Activated B cell treated with CpG ODN at 0.5 μM for 24 hours (primary cell): ENCODE measurements at regions of chr19 and their contacts with region 1.

Region 1: DNA sequence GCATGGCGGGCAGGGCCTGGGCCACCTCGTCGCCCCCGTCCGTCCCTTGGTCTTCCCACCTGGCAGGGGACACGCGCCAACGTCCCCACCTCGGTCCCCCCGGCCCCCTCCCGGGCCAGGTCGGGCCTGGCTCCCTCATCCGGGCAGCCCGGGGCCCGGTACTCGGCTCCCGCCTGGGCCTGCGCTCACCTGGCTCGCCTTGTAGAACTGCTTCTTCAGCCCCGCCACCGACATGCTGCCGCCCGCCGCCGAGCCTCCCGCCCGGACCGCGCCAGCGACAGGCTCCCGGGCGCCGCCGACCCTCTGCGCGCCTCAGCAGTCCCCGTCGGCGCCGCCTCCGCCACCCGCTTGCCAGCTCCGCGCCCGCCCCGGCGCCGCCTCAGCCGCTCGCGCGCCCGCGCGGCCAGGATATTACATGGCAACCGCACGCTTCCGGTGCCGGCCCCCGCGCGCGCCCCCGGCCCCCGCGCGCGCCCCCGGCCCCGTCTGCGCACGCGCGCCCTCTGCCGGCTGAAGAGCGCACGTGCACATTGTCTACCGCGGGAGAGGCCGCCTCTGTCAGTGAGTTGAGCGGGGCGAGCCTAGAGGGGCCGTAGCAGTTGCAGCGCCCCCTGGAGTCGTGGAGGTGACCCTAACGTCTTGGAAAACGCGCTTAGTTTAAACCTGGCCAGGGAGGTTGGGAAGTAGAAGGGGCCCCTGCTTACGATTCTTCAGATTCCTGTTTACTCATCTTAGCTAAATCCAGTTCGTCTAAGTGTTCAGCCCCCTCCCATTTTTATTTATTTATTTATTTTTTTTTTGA is at the start of gene SH3GL1:
- DNase-seq: peak; percentile 95
- ATAC-seq: peak; percentile 65
- H3K4me3 Mint-ChIP-seq: peak within 1 kb of the TSS; percentile 88
- H3K27ac Mint-ChIP-seq: peak within 1 kb of the TSS; percentile 91
- H3K4me1 Mint-ChIP-seq: peaks cover 59% of the 10 kb centered on the region
- H3K27me3 Mint-ChIP-seq: no peaks in the 10 kb centered on the region
- CTCF ChIP-seq: peak; percentile 58
- total RNA-seq, gene SH3GL1: 33.8 and 43.7 TPM in 2 replicates

Region 2: DNA sequence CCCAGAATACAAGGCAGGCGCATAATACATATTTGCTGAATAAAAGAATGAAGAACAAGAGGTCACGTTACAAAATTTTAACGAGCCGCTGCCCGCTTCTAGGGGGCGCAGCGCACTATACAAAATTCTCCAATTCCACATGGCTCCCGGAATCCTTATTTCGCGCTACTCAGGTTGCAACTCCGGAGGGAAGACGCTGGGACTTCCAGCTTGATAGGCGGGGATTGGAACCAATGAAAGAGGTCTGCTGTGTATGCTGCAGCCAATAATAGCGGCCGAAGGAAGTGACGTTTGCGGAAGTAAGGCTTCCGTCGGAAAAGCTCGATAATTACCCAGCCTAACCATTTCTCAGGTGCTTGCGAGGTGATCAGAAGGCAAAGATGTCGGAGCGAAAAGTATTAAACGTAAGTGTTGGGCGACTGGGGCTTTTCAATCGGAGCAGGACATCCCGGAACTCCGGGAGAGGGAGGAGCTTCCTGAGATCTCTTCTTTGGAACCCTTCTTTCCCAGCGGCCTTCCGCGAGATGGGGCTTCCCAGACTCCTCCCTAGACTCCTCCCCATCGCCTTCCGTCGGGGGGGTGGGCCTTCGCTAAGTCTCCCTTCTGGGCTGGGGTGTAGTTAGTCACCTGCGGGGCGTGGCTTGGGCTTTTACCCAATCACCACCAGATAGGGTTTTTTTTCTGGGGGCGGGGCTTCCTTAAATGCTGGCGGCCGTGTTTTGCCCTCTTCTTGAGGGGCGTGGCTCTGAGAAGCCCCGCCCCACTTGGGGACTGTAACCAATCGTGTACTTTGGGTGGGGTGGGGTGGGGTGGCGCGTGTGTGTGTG is 153.4 kb before region 1 on chr19 and contains the start of gene YJU2:
- CTCF ChIA-PET with region 1: no interaction called
- POLR2A ChIA-PET with region 1: interaction called, 3 read pairs
- intact Hi-C with region 1: loop called (anchors 1 kb)
- DNase-seq: peak; percentile 89
- ATAC-seq: peak; percentile 96
- H3K4me3 Mint-ChIP-seq: peak within 1 kb of the TSS; percentile 90
- H3K27ac Mint-ChIP-seq: peak within 1 kb of the TSS; percentile 96
- H3K4me1 Mint-ChIP-seq: peaks cover 35% of the 10 kb centered on the region
- H3K27me3 Mint-ChIP-seq: no peaks in the 10 kb centered on the region
- CTCF ChIP-seq: no peak
- total RNA-seq, gene YJU2: 40.7 and 43.0 TPM in 2 replicates

Region 3: GRCh38 chr19:4278419-4279266 is 121.7 kb before region 1 on chr19 and contains the start of gene SHD:
- CTCF ChIA-PET with region 1: no interaction called
- POLR2A ChIA-PET with region 1: no interaction called
- intact Hi-C with region 1: no loop called
- DNase-seq: no peak
- ATAC-seq: no peak
- H3K4me3 Mint-ChIP-seq: peak within 1 kb of the TSS; percentile 32
- H3K27ac Mint-ChIP-seq: no peak within 1 kb of the TSS
- H3K4me1 Mint-ChIP-seq: peaks cover 4% of the 10 kb centered on the region
- H3K27me3 Mint-ChIP-seq: peaks cover 31% of the 10 kb centered on the region
- CTCF ChIP-seq: no peak
- total RNA-seq, gene SHD: not detected in 2 replicates

Region 4: DNA sequence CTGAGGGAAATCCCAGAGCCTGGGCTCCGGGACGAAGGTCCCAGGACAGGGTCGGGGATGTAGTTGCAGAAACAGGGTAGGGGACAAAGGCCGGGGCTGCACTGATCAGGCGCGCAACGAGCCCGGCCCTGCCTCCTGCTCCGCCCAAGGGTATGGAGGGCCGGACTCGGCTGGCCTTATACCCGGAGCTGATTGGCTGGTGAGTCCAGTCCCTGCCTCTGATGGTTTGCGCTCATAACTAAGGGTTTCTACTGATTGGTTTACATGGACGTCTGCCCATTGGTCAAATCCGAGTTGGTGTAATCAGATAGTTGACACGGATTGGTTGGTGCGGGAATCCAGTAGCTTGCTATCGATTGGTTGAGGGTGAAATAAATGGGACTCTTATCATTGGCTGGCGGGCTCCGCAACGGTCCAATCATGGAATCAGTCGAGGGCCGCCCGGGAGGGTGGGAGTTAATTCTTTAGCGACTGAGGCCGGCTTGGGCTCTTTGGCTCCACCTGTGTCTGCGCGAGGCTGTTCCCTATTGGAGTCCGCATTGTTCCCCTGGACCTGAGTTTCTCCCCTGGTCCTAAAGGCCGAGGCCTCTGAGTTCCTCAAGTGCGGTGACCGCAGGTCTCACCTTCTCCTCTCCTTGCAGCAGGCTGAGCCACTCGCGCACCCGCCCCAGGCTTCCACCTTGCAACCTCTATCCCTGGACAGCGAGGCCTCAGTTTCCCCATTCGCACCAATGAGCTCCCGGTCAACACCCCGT is 57.5 kb before region 1 on chr19:
- CTCF ChIA-PET with region 1: no interaction called
- POLR2A ChIA-PET with region 1: interaction called, 20 read pairs
- intact Hi-C with region 1: loop called (anchors 1 kb)
- DNase-seq: peak; percentile 75
- ATAC-seq: peak; percentile 85
- H3K4me3 Mint-ChIP-seq: peak overlapping the region; percentile 91
- H3K27ac Mint-ChIP-seq: peak overlapping the region; percentile 82
- H3K4me1 Mint-ChIP-seq: peaks cover 35% of the 10 kb centered on the region
- H3K27me3 Mint-ChIP-seq: no peaks in the 10 kb centered on the region
- CTCF ChIP-seq: no peak

Region 5: GRCh38 chr19:4369888-4370260 is 30.5 kb before region 1 on chr19:
- CTCF ChIA-PET with region 1: interaction called, 31 read pairs
- POLR2A ChIA-PET with region 1: interaction called, 13 read pairs
- intact Hi-C with region 1: loop called (anchors 1 kb)
- DNase-seq: peak; percentile 51
- ATAC-seq: peak; percentile 49
- H3K4me3 Mint-ChIP-seq: peak overlapping the region; percentile 78
- H3K27ac Mint-ChIP-seq: peak overlapping the region; percentile 92
- H3K4me1 Mint-ChIP-seq: peaks cover 70% of the 10 kb centered on the region
- H3K27me3 Mint-ChIP-seq: no peaks in the 10 kb centered on the region
- CTCF ChIP-seq: no peak

Region 6: DNA sequence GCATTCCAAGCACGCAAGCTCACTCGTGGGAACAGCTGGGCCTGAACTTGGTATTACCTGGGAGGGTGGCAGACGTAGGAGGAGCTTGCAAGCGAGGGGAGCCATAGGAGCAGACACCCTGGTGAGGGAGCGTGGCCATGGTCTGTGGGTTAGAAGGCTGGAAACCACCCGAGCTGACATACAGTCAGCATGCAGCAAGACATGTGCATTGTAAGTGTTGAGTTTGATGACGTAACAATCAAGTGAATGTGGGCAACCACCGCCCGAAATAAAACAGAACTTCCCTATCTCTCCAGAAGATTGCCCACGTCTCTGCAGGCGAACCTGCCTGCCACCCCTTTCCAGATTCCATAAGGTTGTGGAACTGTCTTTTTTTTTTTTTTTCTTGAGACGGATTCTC is 30.4 kb after region 1 on chr19:
- CTCF ChIA-PET with region 1: no interaction called
- POLR2A ChIA-PET with region 1: no interaction called
- intact Hi-C with region 1: loop called (anchors 1 kb)
- DNase-seq: no peak
- ATAC-seq: peak; percentile 78
- H3K4me3 Mint-ChIP-seq: peak overlapping the region; percentile 38
- H3K27ac Mint-ChIP-seq: peak overlapping the region; percentile 67
- H3K4me1 Mint-ChIP-seq: peaks cover 38% of the 10 kb centered on the region
- H3K27me3 Mint-ChIP-seq: no peaks in the 10 kb centered on the region
- CTCF ChIP-seq: no peak

Region 7: GRCh38 chr19:4471403-4472173 is 71.3 kb after region 1 on chr19:
- CTCF ChIA-PET with region 1: no interaction called
- POLR2A ChIA-PET with region 1: interaction called, 8 read pairs
- intact Hi-C with region 1: loop called (anchors 1 kb)
- DNase-seq: peak; percentile 83
- ATAC-seq: peak; percentile 86
- H3K4me3 Mint-ChIP-seq: no peak overlapping the region
- H3K27ac Mint-ChIP-seq: no peak overlapping the region
- H3K4me1 Mint-ChIP-seq: peaks cover 22% of the 10 kb centered on the region
- H3K27me3 Mint-ChIP-seq: no peaks in the 10 kb centered on the region
- CTCF ChIP-seq: no peak